ENCODE measurements at regions of chr1 and their contacts with region 1.

Region 1: GRCh38 chr1:116826818-116827606 is 72.8 kb downstream of the CD2 start:
- DNase-seq: peak; percentile 73
- H3K4me3 Mint-ChIP-seq: peak overlapping the region; percentile 71
- H3K27ac Mint-ChIP-seq: peak overlapping the region; percentile 97
- H3K4me1 Mint-ChIP-seq: peaks cover 64% of the 10 kb centered on the region
- H3K27me3 Mint-ChIP-seq: no peaks in the 10 kb centered on the region

Region 2: DNA sequence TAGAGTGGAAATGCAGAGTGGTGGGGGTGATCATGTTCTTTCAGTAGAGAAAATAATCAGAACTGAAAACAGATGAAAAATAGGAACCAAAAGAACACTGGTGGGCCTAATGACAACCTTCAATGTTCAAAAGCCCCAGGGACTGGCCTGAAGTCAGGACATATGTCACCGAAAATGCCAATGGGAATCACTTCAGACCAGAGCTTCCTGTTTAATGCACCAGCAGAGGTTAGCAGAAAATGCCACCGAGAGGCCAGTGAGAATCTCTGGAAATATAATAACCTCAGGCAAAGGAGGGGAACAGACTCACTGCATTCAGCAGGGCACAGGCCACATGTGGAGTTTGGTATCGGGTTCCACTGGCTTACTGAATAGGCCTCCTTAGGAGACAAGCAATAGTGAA is 240.3 kb before region 1 on chr1:
- intact Hi-C with region 1: no loop called
- DNase-seq: no peak
- H3K4me3 Mint-ChIP-seq: no peak overlapping the region
- H3K27ac Mint-ChIP-seq: no peak overlapping the region
- H3K4me1 Mint-ChIP-seq: peaks cover 10% of the 10 kb centered on the region
- H3K27me3 Mint-ChIP-seq: no peaks in the 10 kb centered on the region

Region 3: DNA sequence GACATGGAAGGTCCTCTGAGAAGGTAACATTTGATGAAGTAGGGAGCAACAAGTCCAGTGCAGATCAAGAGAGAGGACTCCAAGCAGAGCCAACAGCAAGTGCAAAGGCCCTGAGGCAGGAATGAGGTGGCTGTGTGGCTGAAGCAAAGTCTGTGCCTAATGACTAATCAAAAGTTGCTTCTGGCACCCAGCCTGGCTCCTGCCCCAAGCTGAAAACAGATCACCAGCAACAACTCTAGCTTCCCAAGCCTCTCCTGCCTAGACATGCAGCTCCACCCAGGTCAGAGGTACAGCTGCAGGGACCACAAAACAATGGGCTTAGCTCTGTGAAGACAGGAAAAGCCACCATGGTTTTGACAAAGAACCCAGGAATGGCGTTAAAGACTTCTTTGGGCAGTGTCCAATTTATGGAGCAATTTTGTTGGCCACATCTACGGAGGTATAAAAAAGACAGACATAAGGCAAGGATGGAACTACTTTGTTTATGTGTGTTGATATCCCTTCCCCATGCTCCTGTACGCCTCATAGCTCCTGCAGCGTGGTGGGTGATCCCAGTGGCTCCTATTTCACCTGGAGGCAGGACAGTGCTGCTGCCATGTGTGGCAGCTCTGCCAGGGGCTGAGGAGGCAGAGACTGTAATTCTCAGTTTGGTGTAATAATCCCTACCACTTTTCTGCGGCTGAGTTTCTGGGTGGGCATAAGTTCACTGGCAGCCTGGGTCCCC is 133.1 kb before region 1 on chr1:
- intact Hi-C with region 1: no loop called
- DNase-seq: no peak
- H3K4me3 Mint-ChIP-seq: no peak overlapping the region
- H3K27ac Mint-ChIP-seq: no peak overlapping the region
- H3K4me1 Mint-ChIP-seq: no peaks in the 10 kb centered on the region
- H3K27me3 Mint-ChIP-seq: peaks cover 5% of the 10 kb centered on the region

Region 4: DNA sequence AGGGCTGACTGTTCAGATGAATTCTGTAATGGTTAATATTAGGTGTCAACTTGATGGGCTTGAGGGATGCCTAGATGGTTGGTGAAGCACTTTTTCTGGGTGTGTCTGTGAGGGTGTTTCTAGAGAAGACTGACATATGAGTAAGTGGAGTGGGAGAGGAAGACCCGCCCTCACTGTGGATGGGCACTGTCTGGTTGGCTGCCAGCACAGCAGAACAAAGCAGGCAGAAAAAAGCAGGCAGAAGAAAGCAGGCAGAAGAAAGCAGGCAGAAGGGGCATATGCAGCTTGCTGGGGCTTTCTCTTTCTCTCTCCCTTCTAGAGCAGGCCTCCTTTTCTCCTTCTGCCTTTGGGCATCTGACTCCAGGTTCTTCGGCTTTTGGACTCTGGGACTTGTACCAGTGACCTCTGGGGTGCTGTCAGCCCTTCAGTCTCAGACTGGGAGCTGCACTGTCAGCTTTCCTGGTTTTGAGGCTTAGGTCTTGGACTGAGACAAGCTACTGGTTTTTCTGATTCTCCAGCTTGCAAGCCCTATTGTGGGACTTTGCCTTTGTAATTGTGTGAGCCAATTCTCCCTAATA is 115.7 kb before region 1 on chr1:
- intact Hi-C with region 1: no loop called
- DNase-seq: no peak
- H3K4me3 Mint-ChIP-seq: no peak overlapping the region
- H3K27ac Mint-ChIP-seq: no peak overlapping the region
- H3K4me1 Mint-ChIP-seq: peaks cover 15% of the 10 kb centered on the region
- H3K27me3 Mint-ChIP-seq: peaks cover 6% of the 10 kb centered on the region

Region 5: GRCh38 chr1:116769561-116769977 is 57.4 kb before region 1 on chr1:
- intact Hi-C with region 1: loop called (anchors 1 kb)
- DNase-seq: peak; percentile 74
- H3K4me3 Mint-ChIP-seq: peak overlapping the region; percentile 66
- H3K27ac Mint-ChIP-seq: peak overlapping the region; percentile 100
- H3K4me1 Mint-ChIP-seq: peaks cover 89% of the 10 kb centered on the region
- H3K27me3 Mint-ChIP-seq: no peaks in the 10 kb centered on the region

Region 6: DNA sequence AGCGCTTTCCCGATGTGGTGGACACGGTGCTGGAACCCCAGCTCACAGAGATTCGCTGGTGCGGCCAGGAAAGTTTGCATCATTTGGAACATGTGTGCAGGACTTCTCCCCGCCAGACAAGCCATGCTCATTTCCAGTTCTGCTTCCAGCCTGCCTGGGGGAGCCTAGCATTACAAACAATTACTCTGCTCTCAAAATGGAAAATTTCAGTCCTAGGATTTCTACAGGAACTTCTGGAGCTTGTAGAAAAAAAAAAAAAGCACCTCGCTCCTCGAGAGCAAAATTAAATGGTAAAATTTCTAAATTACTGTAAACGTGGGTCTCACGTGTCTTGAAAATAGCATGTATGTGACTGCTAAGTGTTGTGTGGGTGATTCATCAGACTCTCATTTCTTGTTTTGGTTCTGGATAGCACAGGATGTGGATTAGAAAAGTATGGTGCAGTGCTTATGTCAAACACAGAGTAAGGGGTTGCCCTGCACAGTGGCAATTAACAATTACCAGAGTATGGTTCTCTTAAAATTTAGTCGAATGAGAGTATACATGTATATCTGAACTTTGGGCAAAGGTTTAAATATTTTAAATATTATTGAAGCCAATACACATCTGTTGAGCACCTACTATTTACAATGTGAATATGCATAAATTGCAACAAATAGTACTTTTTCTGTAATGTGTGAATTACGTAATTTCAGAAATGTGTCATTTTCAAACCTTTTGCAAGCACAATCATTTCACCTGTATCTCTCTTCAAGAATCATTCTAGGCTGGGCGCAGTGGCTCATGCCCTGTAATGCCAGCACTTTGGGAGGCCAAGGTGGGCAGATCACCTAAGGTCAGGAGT is 20.9 kb after region 1 on chr1:
- intact Hi-C with region 1: loop called (anchors 1 kb)
- DNase-seq: no peak
- H3K4me3 Mint-ChIP-seq: no peak overlapping the region
- H3K27ac Mint-ChIP-seq: peak overlapping the region; percentile 11
- H3K4me1 Mint-ChIP-seq: peaks cover 22% of the 10 kb centered on the region
- H3K27me3 Mint-ChIP-seq: no peaks in the 10 kb centered on the region

Region 7: DNA sequence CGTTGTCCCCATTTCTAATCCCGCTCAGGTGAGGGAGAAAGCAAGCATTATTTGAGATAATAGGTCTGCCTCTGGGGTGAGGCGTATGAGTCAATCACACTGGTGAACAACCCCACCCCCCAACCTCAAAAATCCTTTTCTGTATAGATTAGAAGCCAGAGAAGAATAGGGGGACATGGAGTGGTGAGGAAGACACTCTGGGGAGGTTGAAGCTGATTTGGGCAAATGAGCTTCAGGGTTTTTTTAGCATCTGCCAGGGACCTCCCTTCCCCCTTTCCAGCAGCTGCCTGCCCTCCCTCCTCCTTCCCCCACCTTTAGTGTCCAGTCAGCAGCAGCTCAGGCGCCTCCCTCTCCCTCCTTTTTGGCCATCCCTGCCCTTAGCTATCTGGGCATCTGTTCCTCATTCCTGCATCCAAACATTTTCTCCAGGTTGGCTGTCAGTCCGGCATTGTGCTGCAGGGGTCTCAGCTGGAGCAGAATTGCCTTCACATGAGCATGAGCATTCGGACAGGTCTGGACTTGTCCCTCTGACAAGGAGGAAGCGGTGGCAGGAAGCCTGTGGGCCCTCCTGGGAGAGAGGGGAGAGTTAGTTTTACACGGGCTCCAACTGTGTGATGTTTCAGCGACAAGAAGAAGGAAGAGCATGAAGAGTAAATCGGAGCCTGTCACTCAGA is 51.9 kb after region 1 on chr1:
- intact Hi-C with region 1: loop called (anchors 1 kb)
- DNase-seq: no peak
- H3K4me3 Mint-ChIP-seq: no peak overlapping the region
- H3K27ac Mint-ChIP-seq: no peak overlapping the region
- H3K4me1 Mint-ChIP-seq: peaks cover 32% of the 10 kb centered on the region
- H3K27me3 Mint-ChIP-seq: no peaks in the 10 kb centered on the region